Naive thymus-derived CD4-positive, alpha-beta T cell (primary cell): ENCODE measurements at regions of chr17 and their contacts with region 1.

Region 1: DNA sequence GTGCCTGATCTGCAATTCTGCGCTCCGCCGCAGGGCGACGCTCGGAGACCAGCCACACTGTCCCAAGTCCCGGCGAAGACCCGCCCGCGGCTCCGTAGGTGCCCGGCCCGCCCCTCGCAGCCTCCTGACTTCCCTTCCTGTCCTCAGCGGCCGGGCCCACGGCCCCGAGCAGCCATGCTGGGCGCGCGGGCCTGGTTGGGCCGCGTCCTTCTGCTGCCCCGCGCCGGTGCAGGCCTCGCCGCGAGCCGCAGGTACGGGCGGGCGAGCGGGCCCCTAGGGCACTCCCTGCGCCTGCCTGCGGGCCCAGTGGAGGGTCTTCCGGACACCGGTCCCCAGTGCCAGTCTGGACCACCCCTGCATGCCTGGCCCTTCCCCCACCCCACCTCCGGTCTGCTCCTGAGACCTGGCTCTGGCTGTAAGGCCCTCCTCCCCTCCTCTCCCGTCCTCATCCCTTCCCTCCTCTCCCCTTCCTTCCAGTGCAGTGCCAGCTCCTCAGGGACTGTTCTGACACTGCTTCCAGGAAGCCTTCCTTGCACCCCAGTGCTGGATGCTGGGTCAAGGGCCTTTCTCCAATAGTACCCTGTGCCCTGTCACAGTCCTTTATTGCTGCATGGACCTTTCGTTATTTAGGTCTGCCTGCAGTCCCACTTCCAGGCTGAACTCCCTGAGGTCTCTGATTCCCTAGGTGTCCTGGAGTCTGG is at the start of gene SPATA20:
- DNase-seq: peak; percentile 73 to 86 (median 83)
- ATAC-seq: peak; percentile 90
- H3K4me3 ChIP-seq: peak within 1 kb of the TSS; percentile 65
- H3K4me3 Mint-ChIP-seq: peak within 1 kb of the TSS; percentile 52 to 85 (median 76)
- H3K27ac ChIP-seq: peak within 1 kb of the TSS; percentile 66
- H3K27ac Mint-ChIP-seq: peak within 1 kb of the TSS in 5 of 9 donors; percentile 37 to 87 (median 81)
- H3K4me1 ChIP-seq: peaks cover 11% of the 10 kb centered on the region in 2 donors
- H3K4me1 Mint-ChIP-seq: peaks cover 0 to 25% (median 20%) of the 10 kb centered on the region in 7 donors
- H3K27me3 ChIP-seq: no peaks in the 10 kb centered on the region
- H3K27me3 Mint-ChIP-seq: peaks cover 0 to 28% (median 7%) of the 10 kb centered on the region in 5 donors
- total RNA-seq, gene SPATA20: 14.3 to 19.4 (median 16.4) TPM

Region 2: DNA sequence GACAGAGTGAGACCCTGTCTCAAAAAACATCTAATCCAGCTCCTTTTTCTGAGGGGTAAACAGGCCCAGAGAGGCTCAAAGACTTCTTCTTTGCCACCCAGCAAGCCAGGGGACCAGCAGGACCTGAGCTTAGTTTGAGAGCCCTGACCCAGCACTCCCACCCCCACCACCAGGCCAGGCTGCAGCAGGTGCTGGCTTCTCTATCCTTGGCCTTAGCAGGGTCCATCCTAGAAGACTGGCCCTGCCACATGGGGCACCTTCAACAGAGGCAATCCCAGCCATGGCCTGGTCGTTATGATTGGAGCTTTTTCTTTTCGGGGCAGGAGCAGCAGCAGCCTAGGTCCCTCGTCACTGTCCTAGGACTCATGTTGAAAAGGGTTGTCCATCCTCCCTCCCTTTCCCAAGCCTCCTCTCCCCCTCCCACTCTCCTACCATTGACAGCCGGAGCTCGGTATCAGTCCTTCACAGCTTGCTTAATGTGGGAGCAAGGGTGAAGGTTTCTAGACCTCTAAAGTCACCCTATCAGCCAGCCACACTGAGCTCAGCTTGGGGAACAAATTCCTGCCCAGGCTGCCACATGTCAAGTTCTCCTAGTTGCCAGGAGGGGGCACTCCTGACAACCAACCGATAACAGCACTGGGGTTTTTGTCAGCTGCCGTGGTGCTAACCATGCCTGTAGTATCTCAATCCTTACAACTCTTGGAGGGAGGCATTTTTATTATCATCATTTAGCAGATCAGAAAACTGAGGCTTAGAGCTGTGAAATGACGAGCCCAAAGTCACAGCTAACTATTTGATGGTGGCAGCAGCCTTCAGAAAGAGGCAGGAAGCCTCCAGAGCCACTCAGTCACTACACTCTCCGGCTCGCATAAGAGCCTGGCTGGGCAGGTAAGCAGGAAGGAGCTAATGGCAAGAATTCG is 185.4 kb before region 1 on chr17:
- CTCF ChIA-PET with region 1: no interaction called
- POLR2A ChIA-PET with region 1: no interaction called
- intact Hi-C with region 1: no loop called
- DNase-seq: peak in 8 of 9 donors; percentile 44 to 70 (median 61)
- ATAC-seq: peak; percentile 94
- H3K4me3 ChIP-seq: no peak overlapping the region
- H3K4me3 Mint-ChIP-seq: peak overlapping the region; percentile 19 to 76 (median 44)
- H3K27ac ChIP-seq: peak overlapping the region; percentile 12
- H3K27ac Mint-ChIP-seq: peak overlapping the region; percentile 6 to 93 (median 42)
- H3K4me1 ChIP-seq: peaks cover 0 to 6% of the 10 kb centered on the region in 2 donors
- H3K4me1 Mint-ChIP-seq: peaks cover 7 to 15% (median 9%) of the 10 kb centered on the region in 7 donors
- H3K27me3 ChIP-seq: no peaks in the 10 kb centered on the region
- H3K27me3 Mint-ChIP-seq: no peaks in the 10 kb centered on the region

Region 3: GRCh38 chr17:50560185-50560824 is 13.1 kb after region 1 on chr17 and contains the start of gene CACNA1G:
- CTCF ChIA-PET with region 1: interaction called, 4 read pairs
- POLR2A ChIA-PET with region 1: interaction called, 9 read pairs
- intact Hi-C with region 1: loop called (anchors 1 kb)
- DNase-seq: peak; percentile 72 to 93 (median 81)
- ATAC-seq: peak; percentile 94
- H3K4me3 ChIP-seq: peak within 1 kb of the TSS; percentile 73
- H3K4me3 Mint-ChIP-seq: peak within 1 kb of the TSS; percentile 68 to 87 (median 80)
- H3K27ac ChIP-seq: no peak within 1 kb of the TSS
- H3K27ac Mint-ChIP-seq: peak within 1 kb of the TSS in 3 of 9 donors; percentile 13 to 28 (median 25)
- H3K4me1 ChIP-seq: peaks cover 20 to 23% of the 10 kb centered on the region in 2 donors
- H3K4me1 Mint-ChIP-seq: peaks cover 12 to 37% (median 21%) of the 10 kb centered on the region in 7 donors
- H3K27me3 ChIP-seq: peaks cover 19 to 27% of the 10 kb centered on the region in 2 donors
- H3K27me3 Mint-ChIP-seq: peaks cover 38 to 71% (median 46%) of the 10 kb centered on the region in 5 donors
- total RNA-seq, gene CACNA1G: not detected

Region 4: DNA sequence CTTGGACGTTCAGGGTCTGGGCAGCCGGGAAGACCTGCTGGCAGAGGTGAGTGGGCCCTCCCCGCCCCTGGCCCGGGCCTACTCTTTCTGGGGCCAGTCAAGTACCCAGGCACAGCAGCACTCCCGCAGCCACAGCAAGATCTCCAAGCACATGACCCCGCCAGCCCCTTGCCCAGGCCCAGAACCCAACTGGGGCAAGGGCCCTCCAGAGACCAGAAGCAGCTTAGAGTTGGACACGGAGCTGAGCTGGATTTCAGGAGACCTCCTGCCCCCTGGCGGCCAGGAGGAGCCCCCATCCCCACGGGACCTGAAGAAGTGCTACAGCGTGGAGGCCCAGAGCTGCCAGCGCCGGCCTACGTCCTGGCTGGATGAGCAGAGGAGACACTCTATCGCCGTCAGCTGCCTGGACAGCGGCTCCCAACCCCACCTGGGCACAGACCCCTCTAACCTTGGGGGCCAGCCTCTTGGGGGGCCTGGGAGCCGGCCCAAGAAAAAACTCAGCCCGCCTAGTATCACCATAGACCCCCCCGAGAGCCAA is 78.9 kb after region 1 on chr17:
- CTCF ChIA-PET with region 1: interaction called, 4 read pairs
- POLR2A ChIA-PET with region 1: no interaction called
- intact Hi-C with region 1: loop called (anchors 1 kb)
- DNase-seq: peak; percentile 37 to 63 (median 54)
- ATAC-seq: peak; percentile 64
- H3K4me3 ChIP-seq: no peak overlapping the region
- H3K4me3 Mint-ChIP-seq: no peak overlapping the region
- H3K27ac ChIP-seq: no peak overlapping the region
- H3K27ac Mint-ChIP-seq: no peak overlapping the region
- H3K4me1 ChIP-seq: no peaks in the 10 kb centered on the region
- H3K4me1 Mint-ChIP-seq: peaks cover 0 to 7% (median 0%) of the 10 kb centered on the region in 7 donors
- H3K27me3 ChIP-seq: peaks cover 0 to 10% of the 10 kb centered on the region in 2 donors
- H3K27me3 Mint-ChIP-seq: peaks cover 27 to 54% (median 39%) of the 10 kb centered on the region in 5 donors

Region 5: DNA sequence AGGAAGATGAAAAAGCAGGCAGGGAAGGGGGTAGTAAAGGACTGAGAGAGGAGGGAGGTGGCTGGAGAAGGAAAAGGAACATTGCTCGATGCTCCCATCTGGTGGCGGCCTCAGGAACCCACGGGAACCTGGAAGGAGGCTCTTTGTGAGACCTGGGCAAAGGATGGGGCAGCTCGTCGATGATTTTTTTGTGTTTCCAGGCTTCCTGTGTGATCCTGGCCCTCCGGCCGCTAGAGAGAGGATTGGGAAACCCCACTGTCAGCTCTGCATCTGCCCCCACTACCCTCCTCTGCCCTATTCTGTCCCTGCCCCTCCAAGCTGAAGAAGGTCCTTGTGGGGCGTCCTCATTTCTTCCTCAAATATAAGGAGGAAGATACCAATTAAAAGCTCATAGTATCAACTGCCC is 294.8 kb after region 1 on chr17:
- CTCF ChIA-PET with region 1: interaction called, 3 read pairs
- POLR2A ChIA-PET with region 1: no interaction called
- intact Hi-C with region 1: loop called in 1 of 2 experiments (anchors 1 kb)
- DNase-seq: peak in 6 of 9 donors; percentile 34 to 58 (median 50)
- ATAC-seq: peak; percentile 67
- H3K4me3 ChIP-seq: no peak overlapping the region
- H3K4me3 Mint-ChIP-seq: no peak overlapping the region
- H3K27ac ChIP-seq: no peak overlapping the region
- H3K27ac Mint-ChIP-seq: no peak overlapping the region
- H3K4me1 ChIP-seq: no peaks in the 10 kb centered on the region
- H3K4me1 Mint-ChIP-seq: peaks cover 0 to 4% (median 0%) of the 10 kb centered on the region in 7 donors
- H3K27me3 ChIP-seq: no peaks in the 10 kb centered on the region
- H3K27me3 Mint-ChIP-seq: peaks cover 0 to 2% (median 0%) of the 10 kb centered on the region in 5 donors

Region 6: DNA sequence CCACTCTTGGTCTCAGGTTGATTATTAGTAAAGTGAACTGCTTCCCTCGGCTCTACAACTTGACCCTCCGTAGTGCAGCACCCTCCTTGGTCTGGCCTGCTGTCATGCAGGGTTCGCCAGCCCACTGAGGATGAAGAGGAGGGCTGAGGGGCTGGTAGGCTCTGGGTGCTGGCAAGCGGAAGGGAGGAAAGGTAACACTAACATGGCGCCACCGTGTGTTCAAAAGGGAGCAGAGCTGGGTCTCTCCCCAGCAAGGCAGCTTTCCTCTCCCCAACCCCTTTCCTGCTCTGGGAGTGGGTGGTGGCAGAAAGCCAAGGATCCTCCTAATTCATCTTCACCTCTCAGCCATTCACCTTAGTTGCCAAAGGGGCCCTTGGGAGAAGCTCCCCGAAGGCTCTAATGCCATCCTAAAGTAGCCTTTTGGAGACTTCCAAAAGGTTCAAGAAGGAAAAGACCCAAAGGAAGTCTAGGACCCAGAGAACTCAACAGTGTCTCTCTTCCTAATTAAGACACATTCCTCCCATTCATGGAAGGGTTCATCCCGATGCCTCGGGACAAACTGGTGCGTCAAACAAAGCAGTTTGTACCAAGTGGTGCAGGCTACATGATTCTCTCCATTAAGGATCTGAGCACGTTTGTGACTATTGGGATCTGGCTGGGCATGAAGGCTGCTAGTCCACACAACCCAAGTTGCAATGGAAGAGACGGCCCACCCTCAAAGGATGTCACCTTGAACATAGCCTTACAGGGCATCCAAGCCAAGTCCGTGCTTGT is 409.8 kb after region 1 on chr17:
- CTCF ChIA-PET with region 1: no interaction called
- POLR2A ChIA-PET with region 1: no interaction called
- intact Hi-C with region 1: loop called (anchors 1 to 2 kb)
- DNase-seq: peak; percentile 39 to 72 (median 58)
- ATAC-seq: peak; percentile 92
- H3K4me3 ChIP-seq: no peak overlapping the region
- H3K4me3 Mint-ChIP-seq: peak overlapping the region in 1 of 10 donors; percentile 68
- H3K27ac ChIP-seq: no peak overlapping the region
- H3K27ac Mint-ChIP-seq: peak overlapping the region in 4 of 9 donors; percentile 17 to 62 (median 50)
- H3K4me1 ChIP-seq: peaks cover 0 to 7% of the 10 kb centered on the region in 2 donors
- H3K4me1 Mint-ChIP-seq: peaks cover 0 to 8% (median 4%) of the 10 kb centered on the region in 7 donors
- H3K27me3 ChIP-seq: no peaks in the 10 kb centered on the region
- H3K27me3 Mint-ChIP-seq: no peaks in the 10 kb centered on the region